PC-3 (cell line): ENCODE measurements at regions of chr6 and their contacts with region 1.

Region 1: GRCh38 chr6:26322645-26323482 is 42.1 kb upstream of the BTN3A2 start:
- DNase-seq: peak; percentile 96
- ATAC-seq: peak; percentile 79
- H3K4me3 ChIP-seq: peak overlapping the region; percentile 79
- H3K27ac ChIP-seq: peak overlapping the region; percentile 38; the same call in 1 of the 2 replicates
- H3K4me1 ChIP-seq: peaks cover 8% of the 10 kb centered on the region; the same call in 1 of the 2 replicates
- H3K27me3 ChIP-seq: no peaks in the 10 kb centered on the region
- CTCF ChIP-seq: no peak

Region 2: DNA sequence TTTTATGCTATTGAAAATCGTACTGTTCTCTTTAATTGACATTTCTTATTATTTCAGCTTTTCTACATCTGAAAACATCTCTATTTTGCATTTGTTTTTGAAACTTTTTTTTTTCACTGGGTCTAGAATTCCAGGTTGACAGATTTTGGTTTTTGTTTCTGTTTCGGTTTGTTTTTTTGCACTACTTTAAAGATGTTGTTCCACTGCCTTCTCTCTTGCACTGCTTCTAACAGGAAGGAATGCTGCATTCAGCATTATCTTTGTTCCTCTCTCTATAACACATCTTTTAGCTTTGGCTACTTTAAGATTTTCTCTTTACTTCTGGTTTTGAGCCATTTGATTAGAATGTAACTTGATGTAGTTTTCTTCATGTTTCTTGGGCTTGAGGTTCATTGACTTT is 470.9 kb before region 1 on chr6:
- CTCF ChIA-PET with region 1: no interaction called
- POLR2A ChIA-PET with region 1: no interaction called
- intact Hi-C with region 1: no loop called
- DNase-seq: no peak
- ATAC-seq: no peak
- H3K4me3 ChIP-seq: no peak overlapping the region
- H3K27ac ChIP-seq: no peak overlapping the region
- H3K4me1 ChIP-seq: no peaks in the 10 kb centered on the region
- H3K27me3 ChIP-seq: peaks cover 63% of the 10 kb centered on the region
- CTCF ChIP-seq: no peak

Region 3: GRCh38 chr6:26175428-26176181 is 147.3 kb before region 1 on chr6:
- CTCF ChIA-PET with region 1: no interaction called
- POLR2A ChIA-PET with region 1: interaction called, 12 read pairs
- intact Hi-C with region 1: no loop called
- DNase-seq: peak; percentile 71
- ATAC-seq: peak; percentile 57
- H3K4me3 ChIP-seq: no peak overlapping the region
- H3K27ac ChIP-seq: no peak overlapping the region
- H3K4me1 ChIP-seq: no peaks in the 10 kb centered on the region
- H3K27me3 ChIP-seq: no peaks in the 10 kb centered on the region
- CTCF ChIP-seq: peak; percentile 81

Region 4: GRCh38 chr6:26501482-26501986 is 178.7 kb after region 1 on chr6:
- CTCF ChIA-PET with region 1: no interaction called
- POLR2A ChIA-PET with region 1: no interaction called
- intact Hi-C with region 1: no loop called
- DNase-seq: no peak
- ATAC-seq: no peak
- H3K4me3 ChIP-seq: no peak overlapping the region
- H3K27ac ChIP-seq: no peak overlapping the region
- H3K4me1 ChIP-seq: peaks cover 7% of the 10 kb centered on the region; the same call in 1 of the 2 replicates
- H3K27me3 ChIP-seq: no peaks in the 10 kb centered on the region
- CTCF ChIP-seq: no peak